ENCODE measurements at regions of chr10 and their contacts with region 1.

Region 1: GRCh38 chr10:35126530-35127296 is at the start of gene CREM:
- DNase-seq: peak; percentile 65
- H3K4me3 ChIP-seq: peak within 1 kb of the TSS; percentile 90
- H3K27me3 ChIP-seq: no peaks in the 10 kb centered on the region
- CTCF ChIP-seq: peak; percentile 95
- polyA plus RNA-seq, gene CREM: 20.5 and 28.8 TPM in 2 replicates

Region 2: DNA sequence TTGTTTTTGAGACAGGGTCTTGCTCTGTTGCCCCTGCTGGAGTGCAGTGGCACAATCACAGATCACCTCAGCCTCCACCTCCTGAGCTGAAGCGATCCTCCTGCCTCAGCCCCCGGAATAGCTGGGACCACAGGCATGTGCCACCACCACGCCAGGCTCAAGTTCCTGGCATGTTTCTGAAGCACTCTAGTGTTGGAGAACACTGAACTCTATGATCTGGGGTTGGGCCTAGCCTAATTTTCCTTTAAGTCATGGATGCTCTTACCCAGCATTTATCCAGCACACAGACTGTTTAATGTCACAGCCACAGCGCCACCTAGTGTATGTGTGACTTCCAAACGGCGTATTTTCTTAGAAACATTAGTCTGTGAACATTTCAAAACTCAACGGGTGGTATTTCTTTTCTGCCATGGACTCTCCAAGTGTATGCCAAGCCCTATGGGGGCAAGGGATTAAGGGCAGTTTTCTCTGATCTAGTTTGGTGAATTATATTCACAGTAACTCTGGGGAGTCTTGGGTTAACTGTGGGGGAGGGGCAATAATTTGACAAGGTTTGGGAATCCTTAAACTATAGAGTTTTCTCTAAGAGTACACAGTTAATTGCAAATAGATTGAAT is 91.7 kb after region 1 on chr10:
- CTCF ChIA-PET with region 1: interaction called, 239 read pairs
- POLR2A ChIA-PET with region 1: no interaction called
- DNase-seq: peak; percentile 25
- H3K4me3 ChIP-seq: no peak overlapping the region
- H3K27me3 ChIP-seq: no peaks in the 10 kb centered on the region; the same call in 1 of the 2 replicates
- CTCF ChIP-seq: peak; percentile 74